Panc1 (cell line): ENCODE measurements at regions of chr5 and their contacts with region 1.

Region 1: GRCh38 chr5:171927345-171927941 is 79.0 kb downstream of the FBXW11 start:
- DNase-seq: no peak
- ATAC-seq: no peak
- H3K4me3 ChIP-seq: no peak overlapping the region
- H3K27ac ChIP-seq: no peak overlapping the region; the same call in 1 of the 2 replicates
- H3K4me1 ChIP-seq: peaks cover 12% of the 10 kb centered on the region; the same call in 1 of the 2 replicates
- H3K27me3 ChIP-seq: no peaks in the 10 kb centered on the region
- CTCF ChIP-seq: peak; percentile 61; the same call in 1 of the 2 replicates

Region 2: GRCh38 chr5:171984748-171985419 is 57.4 kb after region 1 on chr5:
- CTCF ChIA-PET with region 1: no interaction called
- POLR2A ChIA-PET with region 1: no interaction called
- in situ Hi-C with region 1: loop called (anchors 10 kb)
- intact Hi-C with region 1: no loop called
- DNase-seq: peak; percentile 61
- ATAC-seq: peak; percentile 76
- H3K4me3 ChIP-seq: no peak overlapping the region
- H3K27ac ChIP-seq: peak overlapping the region; percentile 61
- H3K4me1 ChIP-seq: peaks cover 30% of the 10 kb centered on the region
- H3K27me3 ChIP-seq: no peaks in the 10 kb centered on the region
- CTCF ChIP-seq: no peak